Activated T-helper 1 cell treated with anti-CD3 and anti-CD28 coated beads, Interleukin-12 subunit alpha, Interleukin-12 subunit beta, Interleukin-2, Interleukin-4 antibody, amounts not matched to agents 30 ng/mL and 10 ng/mL and 1 ng/mL, durations not matched to agents 14 hours and 24 hours and 36 hours (primary cell): ENCODE measurements at regions of chr1 and their contacts with region 1.

Region 1: GRCh38 chr1:205321164-205321958 is at the start of gene NUAK2:
- DNase-seq: peak; percentile 78
- H3K4me3 Mint-ChIP-seq: peak within 1 kb of the TSS; percentile 95
- H3K27ac Mint-ChIP-seq: peak within 1 kb of the TSS; percentile 80
- H3K4me1 Mint-ChIP-seq: peaks cover 68% of the 10 kb centered on the region
- H3K27me3 Mint-ChIP-seq: peaks cover 8% of the 10 kb centered on the region
- total RNA-seq, gene NUAK2: 1.1 and 1.3 TPM in 2 replicates

Region 2: GRCh38 chr1:205273551-205273982 is 47.8 kb before region 1 on chr1:
- intact Hi-C with region 1: loop called (anchors 1 kb)
- DNase-seq: peak; percentile 74
- H3K4me3 Mint-ChIP-seq: no peak overlapping the region
- H3K27ac Mint-ChIP-seq: no peak overlapping the region
- H3K4me1 Mint-ChIP-seq: peaks cover 32% of the 10 kb centered on the region
- H3K27me3 Mint-ChIP-seq: no peaks in the 10 kb centered on the region